ENCODE measurements at regions of chr12 and their contacts with region 1.

Region 1: DNA sequence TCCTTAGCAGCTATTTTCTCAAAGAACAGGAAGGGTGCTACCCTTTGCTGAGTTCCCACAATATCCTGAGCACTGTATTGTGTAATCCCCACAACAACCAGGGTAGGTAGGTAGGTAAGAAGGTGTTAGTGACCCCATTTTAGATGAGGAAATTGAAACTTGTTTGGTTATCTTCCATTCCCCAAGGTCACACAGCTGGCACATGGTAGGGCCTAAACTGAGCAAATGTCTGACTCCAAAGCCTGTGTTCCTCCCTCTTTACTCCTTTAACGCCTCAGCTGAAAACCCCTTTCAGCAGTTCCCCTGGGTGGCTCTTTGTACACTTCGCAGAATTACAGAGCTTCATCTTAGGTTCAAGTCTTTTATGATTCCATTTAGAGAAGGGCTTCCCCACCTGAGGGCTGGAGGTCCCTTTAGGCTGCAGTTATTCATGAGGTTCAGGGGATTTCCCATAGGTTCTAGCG is 26.5 kb upstream of the RIC8B start:
- DNase-seq: peak in 23 of 35 experiments; percentile 5 to 78 (median 20)
- ATAC-seq: peak; percentile 92 to 98 (median 95)
- H3K4me3 ChIP-seq: no peak overlapping the region
- H3K4me3 Mint-ChIP-seq: peak overlapping the region in 2 of 3 donors; percentile 45 to 68
- H3K27ac ChIP-seq: peak overlapping the region; percentile 93
- H3K27ac Mint-ChIP-seq: peak overlapping the region; percentile 84 to 92
- H3K4me1 ChIP-seq: peaks cover 28 to 32% of the 10 kb centered on the region in 2 experiments
- H3K4me1 Mint-ChIP-seq: peaks cover 25 to 39% (median 36%) of the 10 kb centered on the region in 3 donors
- H3K27me3 ChIP-seq: no peaks in the 10 kb centered on the region
- H3K27me3 Mint-ChIP-seq: no peaks in the 10 kb centered on the region

Region 2: GRCh38 chr12:106290666-106291065 is 457.3 kb before region 1 on chr12:
- CTCF ChIA-PET with region 1: no interaction called
- POLR2A ChIA-PET with region 1: interaction called, 3 to 13 read pairs
- DNase-seq: no peak
- ATAC-seq: no peak
- H3K4me3 ChIP-seq: no peak overlapping the region
- H3K4me3 Mint-ChIP-seq: no peak overlapping the region
- H3K27ac ChIP-seq: no peak overlapping the region
- H3K27ac Mint-ChIP-seq: no peak overlapping the region
- H3K4me1 ChIP-seq: no peaks in the 10 kb centered on the region
- H3K4me1 Mint-ChIP-seq: peaks cover 0 to 3% (median 0%) of the 10 kb centered on the region in 3 donors
- H3K27me3 ChIP-seq: peaks cover 0 to 4% of the 10 kb centered on the region in 2 experiments
- H3K27me3 Mint-ChIP-seq: no peaks in the 10 kb centered on the region